ENCODE measurements at regions of chr7 and their contacts with region 1.

Region 1: DNA sequence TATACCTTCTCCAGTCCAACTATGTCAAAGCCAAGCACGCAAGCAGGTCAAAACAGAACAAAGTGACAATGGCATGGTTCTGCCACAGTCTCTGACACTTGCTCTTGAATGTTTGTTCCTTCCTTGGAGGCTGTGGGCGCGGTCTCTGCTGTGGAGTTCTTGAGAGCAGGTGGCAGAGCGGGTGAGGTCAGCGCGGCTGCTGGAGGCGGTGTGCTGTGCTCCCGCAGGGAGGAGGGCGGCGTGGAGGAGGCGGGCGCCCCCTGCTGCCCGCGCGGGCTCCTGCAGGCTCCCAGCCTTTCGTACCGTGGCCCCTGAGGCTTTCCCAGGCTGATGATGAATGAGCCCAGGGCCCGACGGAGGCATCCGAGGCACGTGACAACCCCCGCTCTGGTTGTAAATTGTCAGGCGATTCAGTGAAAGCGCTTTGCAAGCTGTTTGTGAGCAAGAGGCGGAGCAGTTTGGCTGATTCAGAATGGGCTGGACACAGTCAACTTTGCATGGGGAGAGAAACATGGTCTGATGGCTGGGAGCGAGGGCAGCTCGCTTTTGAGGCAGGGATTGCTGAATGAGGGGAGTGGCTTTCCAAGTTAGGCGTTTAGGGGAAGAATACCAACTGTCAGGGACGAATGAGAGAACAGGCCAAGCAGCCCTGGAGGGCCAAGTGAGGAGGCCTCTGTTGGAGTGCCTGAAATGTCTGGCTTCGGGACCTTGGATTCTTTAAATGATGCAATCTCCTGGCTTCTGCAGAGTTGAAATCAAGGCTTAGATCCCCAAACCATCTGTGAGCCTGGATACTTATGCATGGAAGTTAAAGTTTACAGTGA is 46.6 kb downstream of the CDHR3 start:
- DNase-seq: peak; percentile 75
- H3K4me3 Mint-ChIP-seq: no peak overlapping the region
- H3K27ac Mint-ChIP-seq: no peak overlapping the region
- H3K4me1 Mint-ChIP-seq: peaks cover 14% of the 10 kb centered on the region
- H3K27me3 Mint-ChIP-seq: peaks cover 31% of the 10 kb centered on the region

Region 2: GRCh38 chr7:105652359-105652993 is 357.1 kb before region 1 on chr7:
- intact Hi-C with region 1: loop called (anchors 2 kb)
- DNase-seq: peak; percentile 47
- H3K4me3 Mint-ChIP-seq: no peak overlapping the region
- H3K27ac Mint-ChIP-seq: no peak overlapping the region
- H3K4me1 Mint-ChIP-seq: peaks cover 19% of the 10 kb centered on the region
- H3K27me3 Mint-ChIP-seq: no peaks in the 10 kb centered on the region

Region 3: GRCh38 chr7:105759670-105760550 is 249.7 kb before region 1 on chr7:
- intact Hi-C with region 1: loop called (anchors 1 kb)
- DNase-seq: no peak
- H3K4me3 Mint-ChIP-seq: no peak overlapping the region
- H3K27ac Mint-ChIP-seq: no peak overlapping the region
- H3K4me1 Mint-ChIP-seq: peaks cover 31% of the 10 kb centered on the region
- H3K27me3 Mint-ChIP-seq: peaks cover 6% of the 10 kb centered on the region

Region 4: GRCh38 chr7:106143711-106144337 is 134.2 kb after region 1 on chr7:
- intact Hi-C with region 1: no loop called
- DNase-seq: no peak
- H3K4me3 Mint-ChIP-seq: no peak overlapping the region
- H3K27ac Mint-ChIP-seq: no peak overlapping the region
- H3K4me1 Mint-ChIP-seq: no peaks in the 10 kb centered on the region
- H3K27me3 Mint-ChIP-seq: peaks cover 21% of the 10 kb centered on the region